GM18951 (cell line): ENCODE measurements at regions of chr6 and their contacts with region 1.

Region 1: GRCh38 chr6:50816115-50816675 is 2.5 kb upstream of the TFAP2B start:
- POLR2A ChIP-seq: no peak

Region 2: DNA sequence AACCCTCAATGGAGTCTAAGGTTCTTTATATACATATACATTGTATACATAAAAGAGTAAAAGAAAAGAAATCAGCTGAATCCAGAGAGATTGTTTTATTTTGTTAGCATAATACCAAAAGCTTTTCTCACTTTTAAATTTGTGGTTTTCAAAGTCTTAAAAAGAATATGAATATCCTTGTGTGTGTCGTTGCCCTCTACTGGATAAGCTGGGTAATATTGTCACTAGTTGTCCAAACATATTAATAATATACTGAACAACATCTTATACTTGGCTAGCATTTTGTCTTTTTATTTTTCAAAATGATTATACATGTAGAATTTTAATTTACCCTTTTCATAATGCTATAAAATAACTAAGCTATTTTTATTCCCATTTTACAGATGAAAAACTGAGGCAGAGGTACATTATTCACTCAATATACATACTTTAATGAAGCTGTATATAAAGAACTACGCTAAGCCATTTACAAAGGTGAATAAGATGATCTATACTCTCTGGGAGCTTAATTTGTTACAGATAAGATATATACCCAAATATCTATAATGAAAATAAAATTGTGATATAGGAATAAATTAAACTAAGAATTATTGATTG is 534.2 kb after region 1 on chr6:
- in situ Hi-C with region 1: loop called (anchors 25 kb)
- POLR2A ChIP-seq: no peak

Region 3: DNA sequence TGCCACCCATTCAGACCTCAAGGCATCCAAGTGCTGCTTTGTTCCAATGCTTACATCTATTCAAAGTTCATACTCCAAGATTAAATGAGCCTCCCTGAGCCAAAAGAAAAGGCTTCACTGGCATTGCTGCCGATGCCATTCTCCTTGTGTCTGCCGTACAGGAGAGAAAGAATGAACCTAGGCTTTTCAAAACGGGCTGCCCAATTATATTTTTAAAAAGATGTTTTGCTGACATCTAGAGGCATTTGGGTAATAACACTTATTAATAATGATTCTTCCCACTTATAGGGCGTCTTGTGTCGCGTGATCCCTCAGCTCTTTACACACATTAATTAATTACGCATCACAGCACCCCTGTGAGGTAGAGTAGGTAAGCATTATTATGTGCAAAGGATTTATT is 725.7 kb after region 1 on chr6:
- in situ Hi-C with region 1: loop called (anchors 25 kb)
- POLR2A ChIP-seq: no peak

Region 4: DNA sequence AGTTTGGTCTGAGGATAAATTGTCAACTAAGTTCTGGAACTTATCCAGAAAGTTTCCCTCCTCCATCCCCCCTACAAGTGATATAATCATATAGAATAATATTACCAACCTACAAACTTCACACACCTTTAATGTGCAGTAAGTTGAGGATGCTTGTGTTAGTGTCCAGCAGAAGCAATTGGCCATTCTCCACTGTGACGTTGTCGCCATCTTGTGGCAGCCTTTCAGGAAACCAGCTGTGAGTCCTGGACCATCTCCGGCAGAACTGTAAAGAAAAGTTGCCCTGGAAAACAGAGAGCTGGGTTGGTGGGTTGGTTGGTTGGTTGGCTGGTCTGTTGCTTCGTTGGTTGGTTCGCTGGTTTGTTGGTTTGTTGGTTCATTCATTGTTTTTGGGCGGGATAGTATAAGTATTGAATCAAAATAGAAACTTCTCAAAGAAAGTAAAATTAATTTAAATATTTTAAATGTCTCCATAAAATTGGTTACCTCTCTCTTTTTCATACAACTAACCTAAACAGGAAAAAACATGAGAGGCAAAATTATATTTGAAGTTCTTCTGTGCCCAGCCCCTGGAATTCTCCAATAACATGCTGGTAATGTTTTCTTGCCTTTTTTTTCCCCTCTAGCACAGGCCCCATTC is 1143.7 kb after region 1 on chr6:
- in situ Hi-C with region 1: loop called (anchors 25 kb)
- POLR2A ChIP-seq: no peak